ENCODE measurements at regions of chr20 and their contacts with region 1.

Region 1: GRCh38 chr20:19974626-19975435 is 42.3 kb upstream of the NAA20 start:
- DNase-seq: peak; percentile 77 to 89
- ATAC-seq: peak; percentile 83 to 87
- H3K4me3 ChIP-seq: peak overlapping the region; percentile 65
- H3K27ac ChIP-seq: peak overlapping the region; percentile 94 to 95
- H3K4me1 ChIP-seq: peaks cover 40% of the 10 kb centered on the region
- CTCF ChIP-seq: no peak
- EP300 ChIP-seq: no peak
- POLR2A ChIP-seq: peak; percentile 72
- RAD21 ChIP-seq: peak in 1 of 2 experiments; percentile 31; a peak in 3 of 5 replicates

Region 2: DNA sequence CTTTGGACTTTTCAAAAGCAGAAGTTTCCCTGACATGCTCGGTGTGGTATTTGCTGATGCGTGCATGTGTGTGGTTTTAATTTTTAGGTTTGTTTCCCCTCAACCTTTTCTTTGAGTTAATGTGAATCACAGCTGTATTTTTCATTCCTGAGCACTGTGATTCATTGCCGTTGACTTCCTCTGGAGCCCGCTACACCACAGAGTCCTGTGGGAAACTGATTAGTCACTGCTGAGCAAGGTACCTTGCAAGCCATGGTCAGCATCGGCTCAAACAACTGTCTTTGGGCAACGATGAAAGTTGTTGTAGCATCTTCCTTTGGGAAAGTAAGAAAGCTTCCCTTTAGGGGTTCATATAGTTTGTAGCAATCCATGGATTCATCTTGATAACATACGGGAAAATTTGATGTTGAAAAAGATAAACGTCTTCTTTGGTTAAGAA is 159.3 kb before region 1 on chr20:
- CTCF ChIA-PET with region 1: interaction called, 9 read pairs
- POLR2A ChIA-PET with region 1: interaction called, 11 read pairs
- DNase-seq: peak; percentile 95 to 96
- ATAC-seq: peak; percentile 99 to 100
- H3K4me3 ChIP-seq: no peak overlapping the region
- H3K27ac ChIP-seq: peak overlapping the region; percentile 80 to 89
- H3K4me1 ChIP-seq: peaks cover 40% of the 10 kb centered on the region
- CTCF ChIP-seq: peak; percentile 14; the same call in 2 of the 3 replicates
- EP300 ChIP-seq: peak; percentile 75 to 89; a peak in 3 of 5 replicates
- POLR2A ChIP-seq: no peak
- RAD21 ChIP-seq: peak; percentile 57 to 75

Region 3: DNA sequence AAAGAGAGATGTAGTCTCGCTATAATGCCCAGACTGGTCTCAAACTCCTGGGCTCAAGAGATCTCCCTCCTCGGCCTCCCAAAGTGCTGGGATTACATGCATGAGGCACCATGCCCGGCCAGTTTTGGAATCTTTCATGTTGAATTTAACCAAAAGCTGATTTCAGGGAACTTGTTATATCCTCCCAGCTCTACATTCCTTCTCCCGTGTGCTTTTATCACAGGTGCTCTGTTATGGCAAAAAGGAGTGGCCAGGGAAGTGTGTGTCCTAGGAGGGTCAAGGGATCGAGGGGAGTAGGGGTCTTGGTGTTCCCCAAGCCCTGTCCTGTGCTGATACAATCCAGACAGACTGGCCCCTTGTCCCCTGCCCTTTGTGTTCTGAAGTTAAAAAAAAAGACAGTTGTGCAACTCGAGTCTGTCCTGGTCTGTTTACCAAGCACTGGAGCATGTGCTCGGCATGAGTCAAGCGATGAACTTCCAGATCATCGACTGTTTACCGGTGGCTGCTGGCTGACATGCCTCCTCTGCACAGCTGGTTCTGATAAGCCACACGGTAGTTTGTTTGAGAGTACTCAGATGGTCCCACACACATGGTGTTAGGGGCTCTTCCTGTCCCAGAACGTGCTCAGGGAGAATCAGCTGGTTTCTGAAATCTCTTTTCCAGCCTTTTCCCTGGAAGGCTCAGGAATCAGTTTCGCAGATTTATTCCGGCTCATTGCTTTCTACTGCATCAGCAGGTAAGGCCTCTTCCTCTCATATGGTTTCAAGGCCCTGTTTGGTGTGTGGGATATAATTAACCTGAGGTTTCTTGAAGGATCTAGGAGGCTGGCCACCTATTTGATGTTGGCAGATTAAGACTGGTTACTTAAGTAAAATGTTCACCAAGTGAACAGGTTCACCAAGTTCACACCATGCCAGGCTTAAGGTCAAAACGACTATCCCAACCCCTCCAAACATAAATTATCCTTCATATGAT is 10.3 kb before region 1 on chr20:
- CTCF ChIA-PET with region 1: interaction called, 36 read pairs
- POLR2A ChIA-PET with region 1: interaction called, 13 read pairs
- DNase-seq: peak; percentile 78 to 80
- ATAC-seq: peak; percentile 94 to 97
- H3K4me3 ChIP-seq: no peak overlapping the region
- H3K27ac ChIP-seq: peak overlapping the region; percentile 65 to 86
- H3K4me1 ChIP-seq: peaks cover 25% of the 10 kb centered on the region
- CTCF ChIP-seq: no peak
- EP300 ChIP-seq: peak in 1 of 2 experiments; percentile 24; a peak in 1 of 5 replicates
- POLR2A ChIP-seq: no peak
- RAD21 ChIP-seq: peak in 1 of 2 experiments; percentile 49; a peak in 3 of 5 replicates

Region 4: GRCh38 chr20:19986419-19986818 is 11.6 kb after region 1 on chr20:
- CTCF ChIA-PET with region 1: interaction called, 79 read pairs
- POLR2A ChIA-PET with region 1: interaction called, 9 read pairs
- DNase-seq: peak; percentile 45 to 57
- ATAC-seq: peak in 1 of 2 experiments; percentile 54; a peak in 2 of 6 replicates
- H3K4me3 ChIP-seq: no peak overlapping the region
- H3K27ac ChIP-seq: peak overlapping the region; percentile 63 to 86
- H3K4me1 ChIP-seq: peaks cover 58% of the 10 kb centered on the region
- CTCF ChIP-seq: no peak
- EP300 ChIP-seq: no peak
- POLR2A ChIP-seq: no peak
- RAD21 ChIP-seq: no peak

Measured in A549 (cell line).